Activated CD8-positive, alpha-beta T cell treated with anti-CD3 and anti-CD28 coated beads for 36 hours (primary cell): ENCODE measurements at regions of chr22 and their contacts with region 1.

Region 1: DNA sequence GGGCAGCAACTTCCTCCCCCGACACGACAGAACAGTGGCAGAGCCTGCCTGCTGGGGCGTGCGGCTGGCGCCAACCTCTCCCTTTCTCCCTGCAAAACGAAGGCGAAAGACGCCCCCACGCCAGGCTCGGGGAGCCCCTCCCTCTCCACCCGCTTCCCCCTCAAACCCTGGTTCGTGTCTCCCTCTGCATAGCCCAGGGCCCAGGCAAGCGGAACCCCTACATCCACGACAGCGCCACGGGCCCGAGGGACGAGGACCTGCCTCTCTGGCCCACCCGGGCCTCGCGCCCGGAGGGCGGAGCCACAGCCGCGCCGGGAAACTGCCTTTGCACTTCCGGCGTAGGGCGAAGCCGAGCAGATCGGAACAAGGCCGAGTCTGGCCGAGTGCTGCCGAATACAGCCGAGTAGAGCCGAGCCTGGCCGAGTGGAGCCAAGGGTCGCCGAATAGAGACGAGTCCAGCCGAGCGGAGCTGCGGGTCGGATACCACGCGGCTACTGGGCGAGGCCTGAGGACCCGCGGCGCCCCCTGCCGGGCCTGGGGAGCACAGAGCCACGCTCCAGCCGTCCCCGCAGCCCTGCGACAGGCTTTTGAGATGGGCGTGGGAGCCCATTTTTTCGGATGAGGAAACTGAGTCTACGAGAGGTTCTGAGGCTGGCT is 11.2 kb upstream of the C1QTNF6 start:
- DNase-seq: peak; percentile 100
- ATAC-seq: peak; percentile 96
- H3K4me3 Mint-ChIP-seq: peak overlapping the region; percentile 86
- H3K27ac Mint-ChIP-seq: peak overlapping the region; percentile 98
- H3K4me1 Mint-ChIP-seq: peaks cover 70% of the 10 kb centered on the region
- H3K27me3 Mint-ChIP-seq: no peaks in the 10 kb centered on the region
- CTCF ChIP-seq: peak; percentile 85

Region 2: GRCh38 chr22:36873680-36874537 is 325.3 kb before region 1 on chr22:
- CTCF ChIA-PET with region 1: no interaction called
- POLR2A ChIA-PET with region 1: no interaction called
- intact Hi-C with region 1: no loop called
- DNase-seq: peak; percentile 63
- ATAC-seq: peak; percentile 83
- H3K4me3 Mint-ChIP-seq: no peak overlapping the region
- H3K27ac Mint-ChIP-seq: peak overlapping the region; percentile 79
- H3K4me1 Mint-ChIP-seq: peaks cover 16% of the 10 kb centered on the region
- H3K27me3 Mint-ChIP-seq: no peaks in the 10 kb centered on the region
- CTCF ChIP-seq: no peak

Region 3: GRCh38 chr22:37077884-37078485 is 121.2 kb before region 1 on chr22:
- CTCF ChIA-PET with region 1: interaction called, 38 read pairs
- POLR2A ChIA-PET with region 1: interaction called, 9 read pairs
- intact Hi-C with region 1: loop called (anchors 2 kb)
- DNase-seq: peak; percentile 90
- ATAC-seq: no peak
- H3K4me3 Mint-ChIP-seq: peak overlapping the region; percentile 23
- H3K27ac Mint-ChIP-seq: peak overlapping the region; percentile 99
- H3K4me1 Mint-ChIP-seq: peaks cover 56% of the 10 kb centered on the region
- H3K27me3 Mint-ChIP-seq: peaks cover 16% of the 10 kb centered on the region
- CTCF ChIP-seq: peak; percentile 99

Region 4: GRCh38 chr22:37166675-37167066 is 32.6 kb before region 1 on chr22:
- CTCF ChIA-PET with region 1: interaction called, 102 read pairs
- POLR2A ChIA-PET with region 1: interaction called, 18 read pairs
- intact Hi-C with region 1: loop called (anchors 2 kb)
- DNase-seq: peak; percentile 93
- ATAC-seq: peak; percentile 18
- H3K4me3 Mint-ChIP-seq: peak overlapping the region; percentile 72
- H3K27ac Mint-ChIP-seq: peak overlapping the region; percentile 73
- H3K4me1 Mint-ChIP-seq: peaks cover 93% of the 10 kb centered on the region
- H3K27me3 Mint-ChIP-seq: no peaks in the 10 kb centered on the region
- CTCF ChIP-seq: peak; percentile 87

Region 5: GRCh38 chr22:37218771-37219411 is 19.7 kb after region 1 on chr22:
- CTCF ChIA-PET with region 1: interaction called, 45 read pairs
- POLR2A ChIA-PET with region 1: interaction called, 12 read pairs
- intact Hi-C with region 1: no loop called
- DNase-seq: peak; percentile 85
- ATAC-seq: peak; percentile 74
- H3K4me3 Mint-ChIP-seq: peak overlapping the region; percentile 76
- H3K27ac Mint-ChIP-seq: peak overlapping the region; percentile 94
- H3K4me1 Mint-ChIP-seq: peaks cover 74% of the 10 kb centered on the region
- H3K27me3 Mint-ChIP-seq: no peaks in the 10 kb centered on the region
- CTCF ChIP-seq: no peak

Region 6: DNA sequence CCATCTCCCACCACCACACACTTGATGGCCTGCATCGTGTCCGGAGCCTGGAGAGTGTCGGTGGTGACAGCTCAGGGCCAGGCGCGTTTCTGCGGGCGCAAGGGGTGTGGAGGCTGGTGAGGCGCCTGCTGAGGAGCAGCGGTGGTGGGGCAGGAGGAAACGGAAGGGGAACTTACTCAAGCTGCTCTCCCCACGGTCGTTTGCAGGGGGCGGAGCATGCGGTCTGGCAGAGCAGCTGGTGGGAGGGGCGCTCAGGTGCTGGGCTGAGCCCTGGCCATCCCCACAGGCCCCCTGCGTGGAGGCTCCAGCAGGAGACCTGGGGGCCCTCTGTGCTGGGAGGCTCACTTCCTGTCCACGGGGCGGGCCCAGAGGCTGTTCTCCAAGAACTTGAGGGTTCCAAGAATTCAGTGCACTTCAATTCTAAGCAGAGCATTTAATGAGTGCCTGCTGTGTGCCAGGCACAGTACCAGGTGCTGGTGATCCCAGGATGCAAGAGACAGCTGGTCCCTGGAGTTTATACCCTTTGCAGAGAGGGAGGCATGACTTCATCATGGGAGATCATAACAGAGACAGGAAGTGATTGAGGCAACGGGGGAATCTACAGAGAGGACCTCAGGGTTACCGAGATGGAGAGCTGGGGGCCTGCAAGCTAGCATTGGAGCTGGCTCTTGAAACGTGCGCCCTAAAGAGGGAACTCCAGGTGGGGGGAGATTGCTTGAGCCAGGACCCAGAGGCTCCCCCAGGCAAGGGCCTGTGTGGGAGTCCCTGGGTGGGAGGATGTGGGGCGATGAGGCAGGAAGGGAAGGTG is 45.1 kb after region 1 on chr22 and contains the start of gene RAC2:
- CTCF ChIA-PET with region 1: interaction called, 22 read pairs
- POLR2A ChIA-PET with region 1: interaction called, 6 read pairs
- intact Hi-C with region 1: no loop called
- DNase-seq: peak; percentile 98
- ATAC-seq: peak; percentile 71
- H3K4me3 Mint-ChIP-seq: peak within 1 kb of the TSS; percentile 98
- H3K27ac Mint-ChIP-seq: peak within 1 kb of the TSS; percentile 97
- H3K4me1 Mint-ChIP-seq: peaks cover 42% of the 10 kb centered on the region
- H3K27me3 Mint-ChIP-seq: no peaks in the 10 kb centered on the region
- CTCF ChIP-seq: no peak
- total RNA-seq, gene RAC2: 699 to 717 TPM